Activated CD4-positive, alpha-beta memory T cell treated with anti-CD3 and anti-CD28 coated beads, Interleukin-2, amount 10 ng/mL, durations not matched to agents 7 days and 5 days (primary cell): ENCODE measurements at regions of chr12 and their contacts with region 1.

Region 1: DNA sequence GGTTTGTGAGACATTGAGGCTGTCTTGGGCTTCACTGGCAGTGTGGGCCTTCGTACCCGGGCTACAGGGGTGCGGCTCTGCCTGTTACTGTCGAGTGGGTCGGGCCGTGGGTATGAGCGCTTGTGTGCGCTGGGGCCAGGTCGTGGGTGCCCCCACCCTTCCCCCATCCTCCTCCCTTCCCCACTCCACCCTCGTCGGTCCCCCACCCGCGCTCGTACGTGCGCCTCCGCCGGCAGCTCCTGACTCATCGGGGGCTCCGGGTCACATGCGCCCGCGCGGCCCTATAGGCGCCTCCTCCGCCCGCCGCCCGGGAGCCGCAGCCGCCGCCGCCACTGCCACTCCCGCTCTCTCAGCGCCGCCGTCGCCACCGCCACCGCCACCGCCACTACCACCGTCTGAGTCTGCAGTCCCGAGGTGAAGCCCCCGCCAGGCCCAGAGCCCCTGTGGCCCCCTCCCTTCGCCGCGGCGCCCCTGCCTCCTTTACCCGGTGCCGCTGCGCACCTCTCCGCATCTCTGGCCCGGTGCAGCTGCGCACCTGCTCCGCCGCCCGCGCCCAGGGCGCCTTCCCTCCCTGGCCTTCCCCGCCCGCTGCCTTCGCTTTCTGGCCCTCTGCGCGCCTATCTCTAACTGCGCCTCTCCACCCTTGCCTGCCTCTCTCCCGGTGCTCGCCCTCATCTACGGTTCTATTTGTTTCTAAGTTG is at the start of gene ENO2:
- DNase-seq: peak; percentile 86
- H3K4me3 Mint-ChIP-seq: peak within 1 kb of the TSS; percentile 90
- H3K27ac Mint-ChIP-seq: peak within 1 kb of the TSS; percentile 80
- H3K4me1 Mint-ChIP-seq: peaks cover 50% of the 10 kb centered on the region
- H3K27me3 Mint-ChIP-seq: no peaks in the 10 kb centered on the region
- total RNA-seq, gene ENO2: 206 to 207 TPM

Region 2: DNA sequence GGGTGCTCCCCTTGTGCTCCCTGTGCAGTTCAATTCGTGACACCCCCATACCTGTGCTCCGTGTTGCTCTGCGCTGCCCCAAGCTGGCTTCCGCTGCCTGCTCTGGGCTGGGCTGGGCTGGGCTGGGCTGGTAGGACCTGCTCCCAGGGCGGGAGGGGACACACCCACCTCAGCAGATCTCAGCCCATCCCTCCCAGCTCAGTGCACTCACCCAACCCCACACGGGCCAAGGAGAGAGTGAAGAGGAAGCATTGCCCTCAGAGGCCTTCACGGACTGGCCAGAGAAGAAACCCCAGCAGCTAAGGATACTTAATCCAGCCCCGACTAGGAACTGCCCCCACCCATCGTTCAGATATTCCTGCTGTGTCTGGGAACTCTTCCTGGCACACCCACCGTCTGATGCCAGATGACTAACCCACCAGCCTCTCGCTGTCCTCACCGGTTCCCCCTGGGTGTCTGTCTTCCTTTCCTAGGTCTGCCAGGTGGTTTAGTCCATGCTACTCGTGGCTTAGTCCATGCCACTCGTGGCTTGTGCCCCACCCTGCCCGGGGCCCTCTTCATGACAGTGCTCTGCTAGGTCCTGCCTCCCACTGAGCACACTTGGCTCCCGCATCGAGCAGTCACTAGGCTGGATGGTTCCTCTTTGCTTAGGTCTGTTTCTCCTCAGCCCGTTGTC is 278.4 kb before region 1 on chr12 and contains the start of gene LPAR5:
- CTCF ChIA-PET with region 1: no interaction called
- POLR2A ChIA-PET with region 1: no interaction called
- DNase-seq: peak; percentile 46
- H3K4me3 Mint-ChIP-seq: peak within 1 kb of the TSS; percentile 68
- H3K27ac Mint-ChIP-seq: peak within 1 kb of the TSS; percentile 70
- H3K4me1 Mint-ChIP-seq: peaks cover 45% of the 10 kb centered on the region
- H3K27me3 Mint-ChIP-seq: peaks cover 2% of the 10 kb centered on the region
- total RNA-seq, gene LPAR5: 7.8 to 8.0 TPM

Region 3: GRCh38 chr12:6821591-6822425 is 92.6 kb before region 1 on chr12 and contains the start of gene GPR162:
- CTCF ChIA-PET with region 1: no interaction called
- POLR2A ChIA-PET with region 1: no interaction called
- DNase-seq: no peak
- H3K4me3 Mint-ChIP-seq: peak within 1 kb of the TSS; percentile 9
- H3K27ac Mint-ChIP-seq: peak within 1 kb of the TSS; percentile 12
- H3K4me1 Mint-ChIP-seq: peaks cover 16% of the 10 kb centered on the region
- H3K27me3 Mint-ChIP-seq: peaks cover 43% of the 10 kb centered on the region
- total RNA-seq, gene GPR162: not detected

Region 4: GRCh38 chr12:6890789-6891645 is 23.4 kb before region 1 on chr12:
- CTCF ChIA-PET with region 1: interaction called, 34 read pairs
- POLR2A ChIA-PET with region 1: interaction called, 53 read pairs
- DNase-seq: peak; percentile 99
- H3K4me3 Mint-ChIP-seq: peak overlapping the region; percentile 79
- H3K27ac Mint-ChIP-seq: peak overlapping the region; percentile 93
- H3K4me1 Mint-ChIP-seq: peaks cover 38% of the 10 kb centered on the region
- H3K27me3 Mint-ChIP-seq: no peaks in the 10 kb centered on the region

Region 5: DNA sequence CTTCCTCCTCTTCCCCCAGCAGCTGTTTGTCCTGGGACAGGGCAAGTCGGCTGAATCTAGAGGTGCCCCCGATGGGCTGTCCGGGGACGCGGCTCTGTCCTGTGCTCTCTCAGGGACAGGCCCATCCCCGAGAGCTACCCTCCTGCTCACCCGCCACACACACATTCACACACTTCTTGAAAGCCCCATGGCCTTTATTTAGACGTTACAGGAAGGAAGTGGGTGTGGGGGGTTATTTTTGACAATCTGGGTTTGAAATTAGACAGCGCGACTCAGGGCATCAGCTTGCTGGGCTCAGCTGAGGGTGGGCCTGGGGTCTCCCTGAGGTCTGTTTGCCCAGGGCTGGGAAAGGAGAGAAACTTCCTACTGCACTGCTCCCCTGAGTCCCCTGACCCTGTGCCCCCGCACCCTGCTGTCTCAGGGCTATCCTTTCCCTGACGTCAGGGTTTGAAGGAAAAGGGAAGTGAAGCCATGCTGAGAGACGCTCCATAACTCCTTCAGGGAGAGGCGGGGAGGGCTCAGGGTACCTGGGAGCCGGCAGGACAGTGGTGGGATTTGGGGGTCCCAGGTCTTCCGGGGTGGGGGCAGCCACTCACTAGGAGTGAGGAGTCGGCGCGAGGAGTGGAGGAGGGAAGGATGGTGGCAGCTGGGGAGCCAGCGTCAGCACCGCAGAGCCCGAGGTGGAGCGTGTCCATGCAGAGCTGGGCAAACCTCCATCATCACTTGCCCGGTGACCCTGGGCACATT is 44.8 kb after region 1 on chr12:
- CTCF ChIA-PET with region 1: interaction called, 4 read pairs
- POLR2A ChIA-PET with region 1: interaction called, 15 read pairs
- DNase-seq: peak; percentile 78
- H3K4me3 Mint-ChIP-seq: peak overlapping the region; percentile 88
- H3K27ac Mint-ChIP-seq: peak overlapping the region; percentile 99
- H3K4me1 Mint-ChIP-seq: peaks cover 92% of the 10 kb centered on the region
- H3K27me3 Mint-ChIP-seq: no peaks in the 10 kb centered on the region